ENCODE measurements at regions of chr10 and their contacts with region 1.

Region 1: GRCh38 chr10:11986593-11987216 is 55.9 kb downstream of the UPF2 start:
- DNase-seq: peak; percentile 71
- H3K4me3 ChIP-seq: no peak overlapping the region
- H3K27ac ChIP-seq: no peak overlapping the region
- H3K4me1 ChIP-seq: peaks cover 0 to 6% (median 3%) of the 10 kb centered on the region in 4 donors
- H3K27me3 ChIP-seq: no peaks in the 10 kb centered on the region
- CTCF ChIP-seq: peak; percentile 44 to 78 (median 73)
- EP300 ChIP-seq: no peak
- POLR2A ChIP-seq: no peak

Region 2: DNA sequence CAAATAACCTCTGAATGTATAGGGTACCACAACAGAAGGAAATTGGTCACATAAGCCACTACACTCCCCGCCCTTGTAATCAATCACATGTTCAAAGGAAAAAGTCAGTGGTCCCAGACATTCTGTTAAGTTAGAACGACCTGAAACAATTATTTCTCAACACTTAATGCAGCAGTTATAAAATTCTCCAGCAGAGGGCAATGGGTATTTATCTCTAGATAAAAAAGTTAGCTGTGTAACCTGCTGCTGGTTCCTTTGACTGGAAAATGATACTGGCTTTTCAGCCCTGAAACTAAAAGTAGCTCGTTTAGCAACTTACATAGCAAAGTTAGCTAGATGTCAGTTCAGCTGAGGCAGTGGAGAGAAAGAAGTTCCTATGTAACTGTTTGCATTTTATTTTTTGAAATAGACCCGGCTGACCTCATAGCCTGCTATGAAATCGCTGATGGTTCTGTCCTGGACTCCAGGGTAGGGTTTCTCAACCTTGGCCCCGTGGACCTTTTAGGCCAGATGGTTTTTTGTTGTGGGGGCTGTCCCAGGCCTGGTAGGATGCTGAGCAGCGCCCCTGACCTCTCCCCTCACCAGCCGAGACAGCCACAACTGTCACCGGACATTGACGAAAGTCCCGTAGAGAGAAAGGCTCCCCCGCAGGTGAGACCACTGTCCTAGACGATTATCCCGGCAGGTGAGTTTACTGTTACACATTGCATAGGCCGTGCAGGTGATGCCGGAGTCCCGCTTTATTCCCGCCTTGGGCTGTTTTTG is 203.7 kb before region 1 on chr10:
- intact Hi-C with region 1: loop called (anchors 5 kb)
- DNase-seq: no peak
- H3K4me3 ChIP-seq: no peak overlapping the region
- H3K27ac ChIP-seq: no peak overlapping the region
- H3K4me1 ChIP-seq: no peaks in the 10 kb centered on the region
- H3K27me3 ChIP-seq: no peaks in the 10 kb centered on the region
- CTCF ChIP-seq: peak in 3 of 4 experiments; percentile 51 to 61 (median 59)
- EP300 ChIP-seq: no peak
- POLR2A ChIP-seq: no peak

Region 3: DNA sequence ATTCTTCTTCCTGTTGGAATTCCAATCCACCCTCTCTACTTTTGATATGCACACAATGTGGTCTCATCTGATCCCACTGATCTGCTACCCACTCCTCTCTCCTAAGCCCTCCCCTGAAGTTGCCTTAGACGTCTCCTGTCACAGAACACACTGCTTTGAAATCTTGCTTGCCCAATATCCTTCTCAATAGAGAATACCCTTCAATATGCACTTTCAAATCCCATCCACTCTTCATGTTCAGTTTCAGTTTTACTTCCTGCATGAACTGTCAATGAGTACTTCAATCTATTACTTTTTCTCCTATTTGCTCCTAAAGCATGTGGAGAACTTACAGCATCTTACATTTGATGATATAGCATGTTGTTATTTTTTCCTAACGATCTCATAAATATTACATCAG is 37.6 kb before region 1 on chr10:
- intact Hi-C with region 1: no loop called
- DNase-seq: no peak
- H3K4me3 ChIP-seq: no peak overlapping the region
- H3K27ac ChIP-seq: no peak overlapping the region
- H3K4me1 ChIP-seq: peaks cover 0 to 9% (median 3%) of the 10 kb centered on the region in 4 donors
- H3K27me3 ChIP-seq: no peaks in the 10 kb centered on the region
- CTCF ChIP-seq: no peak
- EP300 ChIP-seq: no peak
- POLR2A ChIP-seq: no peak

Region 4: DNA sequence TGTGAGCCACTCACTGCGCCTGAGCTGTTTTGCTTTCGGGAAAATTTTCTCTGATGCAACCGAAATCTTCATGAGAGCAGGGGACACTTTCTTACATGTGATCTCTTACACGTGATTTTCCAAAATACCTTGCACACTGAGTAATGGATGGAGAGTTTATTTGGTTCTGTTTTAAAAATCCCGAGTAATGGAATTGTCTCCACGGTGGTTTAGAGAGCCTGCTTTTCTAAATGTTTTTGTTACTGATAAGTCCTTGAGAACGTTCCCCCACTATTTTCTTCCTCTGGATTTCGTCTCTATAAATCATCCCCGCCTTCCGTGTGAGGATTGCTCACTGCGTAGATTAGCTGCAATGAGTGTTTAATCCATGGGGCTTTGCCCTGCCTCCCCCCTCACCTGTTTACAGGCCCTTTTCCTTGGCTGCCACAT is 388.4 kb after region 1 on chr10:
- intact Hi-C with region 1: no loop called
- DNase-seq: peak; percentile 27
- H3K4me3 ChIP-seq: no peak overlapping the region
- H3K27ac ChIP-seq: peak overlapping the region; percentile 15 to 76 (median 58)
- H3K4me1 ChIP-seq: peaks cover 0 to 20% (median 16%) of the 10 kb centered on the region in 4 donors
- H3K27me3 ChIP-seq: no peaks in the 10 kb centered on the region
- CTCF ChIP-seq: no peak
- EP300 ChIP-seq: peak in 1 of 4 donors; percentile 17
- POLR2A ChIP-seq: no peak